Right ventricle myocardium superior (tissue), 1 donor: ENCODE measurements at regions of chr15 and their contacts with region 1.

Region 1: DNA sequence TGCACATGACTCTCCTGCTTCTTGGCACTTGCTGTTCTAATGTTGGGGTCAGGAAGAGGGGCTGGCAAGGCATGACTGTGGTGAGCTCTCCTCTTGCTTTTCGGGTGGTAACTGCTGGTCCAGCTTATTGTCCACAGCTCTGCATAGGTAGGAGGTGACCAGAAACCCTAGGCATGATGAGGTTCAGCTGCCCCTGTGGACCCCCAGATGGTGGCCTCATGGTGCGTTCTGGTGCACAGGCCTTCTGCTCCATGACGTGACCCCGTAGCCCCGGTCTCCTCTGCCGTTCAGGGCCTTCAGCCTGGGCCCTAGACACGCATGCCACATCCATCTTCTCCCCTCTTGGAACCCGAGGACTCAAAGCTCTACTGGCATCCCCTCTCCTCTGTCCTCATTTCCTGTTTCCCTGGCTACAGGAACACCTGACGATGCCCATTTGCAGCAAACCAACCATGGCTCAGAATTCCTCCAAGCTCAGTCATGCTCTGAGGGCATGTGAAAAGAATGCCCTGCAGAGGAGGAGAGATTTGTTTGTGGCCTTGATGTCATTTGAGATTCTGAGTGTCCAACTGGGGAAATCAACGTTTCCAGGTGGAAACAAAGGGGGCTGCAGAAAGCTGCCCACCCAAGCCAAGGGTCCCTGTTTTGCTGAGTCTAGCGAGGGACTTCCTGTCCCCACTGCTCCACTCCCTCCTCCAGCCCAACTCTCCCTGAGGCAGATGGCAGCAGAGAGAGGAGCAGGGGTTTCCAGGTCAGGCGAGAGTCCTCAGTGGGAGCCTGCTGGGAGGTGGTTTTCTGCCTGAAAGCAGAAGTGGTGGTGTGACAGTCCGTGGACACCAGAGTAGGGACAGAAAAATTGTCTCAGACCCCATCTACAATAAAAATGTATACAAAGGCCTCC is 198.7 kb upstream of the LYSMD4 start:
- DNase-seq: no peak
- ATAC-seq: no peak

Region 2: GRCh38 chr15:100330629-100331215 is 398.8 kb after region 1 on chr15:
- intact Hi-C with region 1: loop called (anchors 5 kb)
- DNase-seq: no peak
- ATAC-seq: no peak

Region 3: GRCh38 chr15:100572362-100572983 is 640.5 kb after region 1 on chr15:
- intact Hi-C with region 1: loop called (anchors 5 kb)
- DNase-seq: no peak
- ATAC-seq: no peak